ENCODE measurements at regions of chr22 and their contacts with region 1.

Region 1: DNA sequence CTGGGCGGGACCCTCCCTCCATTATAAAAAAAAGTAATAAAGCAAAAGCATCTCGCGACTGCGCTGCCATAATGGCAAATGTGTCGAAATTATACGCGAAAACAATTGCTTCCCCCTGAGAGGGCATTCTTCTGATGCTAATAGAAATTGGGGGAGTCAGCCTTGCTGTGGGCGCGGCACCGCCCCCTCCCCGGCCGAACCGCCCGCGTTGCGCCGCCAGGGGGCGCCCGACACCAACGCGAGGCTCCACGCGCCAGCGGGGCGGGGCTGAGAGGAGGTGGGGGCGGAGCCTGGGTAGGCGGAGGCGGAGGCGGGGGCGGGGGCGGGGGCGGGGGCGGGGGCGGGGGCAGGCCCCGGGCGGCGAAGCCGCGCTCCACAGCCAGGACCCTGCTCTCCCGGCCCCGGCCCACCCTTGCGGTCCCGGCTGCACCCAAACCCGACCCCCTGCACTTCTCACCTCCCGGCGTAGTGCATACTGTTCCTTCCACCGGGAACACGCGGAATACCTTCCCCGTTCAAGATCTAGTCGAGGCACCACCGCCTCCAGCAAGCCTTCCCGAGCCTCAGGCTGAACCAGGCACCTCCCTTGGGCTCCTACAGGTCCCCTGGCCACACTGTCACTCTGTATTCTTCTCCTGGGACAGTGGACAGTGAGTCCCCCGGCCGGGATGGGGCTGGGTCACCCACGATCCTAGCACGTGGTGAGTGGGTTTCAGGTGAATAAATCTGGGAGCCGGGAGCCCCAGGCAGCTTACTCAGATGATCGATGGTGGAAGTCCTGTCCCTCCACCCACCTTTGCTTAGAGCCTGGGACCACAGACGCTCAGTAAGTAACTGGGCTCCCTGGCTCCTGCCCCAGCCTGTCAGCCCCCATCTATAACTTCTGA is 15.5 kb upstream of the UPK3A start:
- DNase-seq: peak; percentile 43
- H3K4me3 ChIP-seq: peak overlapping the region; percentile 67 to 82 (median 68)
- H3K27ac ChIP-seq: no peak overlapping the region
- H3K4me1 ChIP-seq: peaks cover 10% of the 10 kb centered on the region
- H3K27me3 ChIP-seq: no peaks in the 10 kb centered on the region
- CTCF ChIP-seq: peak; percentile 63 to 81

Region 2: DNA sequence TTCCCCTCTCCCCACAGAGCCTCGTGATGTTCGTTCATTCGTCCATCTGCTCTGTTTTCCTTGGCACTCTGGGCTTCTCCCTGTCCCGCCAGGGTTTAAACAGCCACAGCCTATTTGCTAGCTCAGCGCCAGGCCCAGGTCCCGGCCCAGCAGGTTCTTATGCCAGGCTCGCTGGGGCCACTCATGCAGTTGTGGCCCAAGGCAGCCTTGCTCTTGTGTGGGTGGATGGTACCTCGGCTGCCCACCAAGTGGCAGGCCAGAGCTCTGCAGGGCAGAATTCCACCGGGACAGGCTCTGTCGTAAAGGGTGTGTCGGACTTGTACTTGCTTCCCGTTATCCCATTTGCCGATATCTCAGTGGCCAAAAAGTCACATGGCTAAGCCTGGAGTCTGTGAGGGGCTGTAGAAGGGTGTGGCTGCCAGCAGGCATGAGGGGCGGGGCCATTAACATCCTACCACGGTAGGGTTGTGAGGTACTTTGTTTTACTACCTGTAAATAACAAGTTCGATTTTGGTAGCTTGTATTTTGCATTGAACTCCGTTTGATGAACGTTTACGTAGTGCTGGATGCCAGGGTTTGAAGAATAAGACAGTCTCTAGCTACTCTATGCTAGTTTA is 48.5 kb after region 1 on chr22:
- CTCF ChIA-PET with region 1: no interaction called
- dilution Hi-C with region 1: no loop called
- in situ Hi-C with region 1: no loop called
- intact Hi-C with region 1: loop called (anchors 1 kb)
- DNase-seq: peak; percentile 70
- H3K4me3 ChIP-seq: peak overlapping the region in 1 of 3 experiments; percentile 11
- H3K27ac ChIP-seq: peak overlapping the region; percentile 71
- H3K4me1 ChIP-seq: peaks cover 26% of the 10 kb centered on the region
- H3K27me3 ChIP-seq: no peaks in the 10 kb centered on the region
- CTCF ChIP-seq: peak; percentile 44 to 65

Region 3: DNA sequence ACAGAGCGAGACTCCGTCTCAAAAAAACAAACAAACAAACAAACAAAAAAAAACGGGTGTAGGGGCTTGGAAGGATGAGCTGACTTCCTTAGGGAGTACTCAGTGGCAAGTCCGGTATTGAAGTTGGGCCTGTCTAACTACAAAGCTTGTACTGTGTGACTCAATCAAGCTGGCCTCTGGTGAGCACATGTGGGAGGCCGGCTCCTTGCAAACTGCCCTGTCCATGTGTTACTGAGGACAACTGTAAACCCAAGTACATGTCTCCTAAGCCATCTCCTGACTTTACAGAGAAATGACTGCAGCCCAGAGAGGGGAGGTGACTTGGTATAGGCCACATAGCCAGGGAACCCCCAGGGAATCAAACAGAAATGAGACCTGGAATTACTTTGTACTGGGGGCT is 155.9 kb after region 1 on chr22:
- CTCF ChIA-PET with region 1: no interaction called
- dilution Hi-C with region 1: loop called (anchors 5 kb)
- in situ Hi-C with region 1: no loop called
- intact Hi-C with region 1: no loop called
- DNase-seq: no peak
- H3K4me3 ChIP-seq: no peak overlapping the region
- H3K27ac ChIP-seq: no peak overlapping the region
- H3K4me1 ChIP-seq: no peaks in the 10 kb centered on the region
- H3K27me3 ChIP-seq: no peaks in the 10 kb centered on the region
- CTCF ChIP-seq: no peak

Region 4: GRCh38 chr22:45526768-45527360 is 257.7 kb after region 1 on chr22:
- CTCF ChIA-PET with region 1: no interaction called
- dilution Hi-C with region 1: loop called (anchors 5 kb)
- in situ Hi-C with region 1: no loop called
- intact Hi-C with region 1: no loop called
- DNase-seq: no peak
- H3K4me3 ChIP-seq: no peak overlapping the region
- H3K27ac ChIP-seq: no peak overlapping the region
- H3K4me1 ChIP-seq: peaks cover 16% of the 10 kb centered on the region
- H3K27me3 ChIP-seq: no peaks in the 10 kb centered on the region
- CTCF ChIP-seq: no peak

Region 5: GRCh38 chr22:45863981-45864751 is 595.0 kb after region 1 on chr22:
- CTCF ChIA-PET with region 1: no interaction called
- dilution Hi-C with region 1: loop called (anchors 10 kb)
- in situ Hi-C with region 1: no loop called
- intact Hi-C with region 1: no loop called
- DNase-seq: peak; percentile 24
- H3K4me3 ChIP-seq: no peak overlapping the region
- H3K27ac ChIP-seq: no peak overlapping the region
- H3K4me1 ChIP-seq: peaks cover 15% of the 10 kb centered on the region
- H3K27me3 ChIP-seq: peaks cover 21% of the 10 kb centered on the region
- CTCF ChIP-seq: peak; percentile 94 to 95